Naive thymus-derived CD4-positive, alpha-beta T cell (primary cell): ENCODE measurements at regions of chr22 and their contacts with region 1.

Region 1: GRCh38 chr22:26398741-26399153 is 30.3 kb upstream of the ASPHD2 start:
- DNase-seq: peak; percentile 11 to 61 (median 42)
- ATAC-seq: peak; percentile 83
- H3K4me3 ChIP-seq: no peak overlapping the region
- H3K4me3 Mint-ChIP-seq: no peak overlapping the region
- H3K27ac ChIP-seq: no peak overlapping the region
- H3K27ac Mint-ChIP-seq: no peak overlapping the region
- H3K4me1 ChIP-seq: no peaks in the 10 kb centered on the region
- H3K4me1 Mint-ChIP-seq: peaks cover 0 to 4% (median 0%) of the 10 kb centered on the region in 7 donors
- H3K27me3 ChIP-seq: no peaks in the 10 kb centered on the region
- H3K27me3 Mint-ChIP-seq: peaks cover 2 to 13% (median 4%) of the 10 kb centered on the region in 5 donors

Region 2: GRCh38 chr22:26245001-26245400 is 153.7 kb before region 1 on chr22:
- CTCF ChIA-PET with region 1: no interaction called
- POLR2A ChIA-PET with region 1: no interaction called
- intact Hi-C with region 1: no loop called
- DNase-seq: no peak
- ATAC-seq: no peak
- H3K4me3 ChIP-seq: no peak overlapping the region
- H3K4me3 Mint-ChIP-seq: no peak overlapping the region
- H3K27ac ChIP-seq: no peak overlapping the region
- H3K27ac Mint-ChIP-seq: no peak overlapping the region
- H3K4me1 ChIP-seq: no peaks in the 10 kb centered on the region
- H3K4me1 Mint-ChIP-seq: no peaks in the 10 kb centered on the region
- H3K27me3 ChIP-seq: no peaks in the 10 kb centered on the region
- H3K27me3 Mint-ChIP-seq: peaks cover 0 to 46% (median 24%) of the 10 kb centered on the region in 5 donors

Region 3: DNA sequence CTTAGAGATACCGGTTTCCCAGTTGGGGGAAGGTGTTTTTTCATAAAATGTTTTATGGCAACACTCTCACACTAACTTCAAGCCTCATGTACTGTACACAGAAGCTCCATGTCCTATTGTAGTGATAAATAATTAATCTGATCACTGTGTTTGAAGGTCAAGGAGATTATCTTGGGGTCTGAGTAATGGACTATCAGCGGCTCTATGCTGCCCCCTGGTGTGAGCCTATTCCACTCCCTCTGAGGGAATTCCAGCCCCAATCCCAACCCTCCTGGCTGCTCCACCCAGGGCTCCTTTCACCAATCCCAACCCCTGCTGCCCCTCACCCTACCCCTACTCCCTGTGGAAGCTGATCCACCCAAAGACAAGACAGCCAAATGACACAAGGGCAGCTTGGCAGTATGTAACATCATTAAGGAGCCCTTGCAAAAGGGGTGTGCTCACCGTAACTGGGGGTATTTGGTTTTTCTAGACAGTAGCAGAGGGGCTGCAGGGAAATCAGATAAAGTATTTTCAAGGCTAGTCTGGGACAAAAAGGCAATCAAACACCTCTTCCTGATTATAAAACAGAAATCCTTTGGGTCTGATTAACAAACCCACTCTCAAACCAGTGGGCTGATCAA is 62.6 kb after region 1 on chr22:
- CTCF ChIA-PET with region 1: interaction called, 50 read pairs
- POLR2A ChIA-PET with region 1: no interaction called
- intact Hi-C with region 1: loop called in 1 of 2 experiments (anchors 1 kb)
- DNase-seq: peak in 4 of 9 donors; percentile 15 to 45 (median 30)
- ATAC-seq: peak; percentile 66
- H3K4me3 ChIP-seq: no peak overlapping the region
- H3K4me3 Mint-ChIP-seq: no peak overlapping the region
- H3K27ac ChIP-seq: no peak overlapping the region
- H3K27ac Mint-ChIP-seq: peak overlapping the region in 2 of 9 donors; percentile 42 to 56
- H3K4me1 ChIP-seq: no peaks in the 10 kb centered on the region
- H3K4me1 Mint-ChIP-seq: peaks cover 0 to 6% (median 4%) of the 10 kb centered on the region in 7 donors
- H3K27me3 ChIP-seq: no peaks in the 10 kb centered on the region
- H3K27me3 Mint-ChIP-seq: no peaks in the 10 kb centered on the region

Region 4: DNA sequence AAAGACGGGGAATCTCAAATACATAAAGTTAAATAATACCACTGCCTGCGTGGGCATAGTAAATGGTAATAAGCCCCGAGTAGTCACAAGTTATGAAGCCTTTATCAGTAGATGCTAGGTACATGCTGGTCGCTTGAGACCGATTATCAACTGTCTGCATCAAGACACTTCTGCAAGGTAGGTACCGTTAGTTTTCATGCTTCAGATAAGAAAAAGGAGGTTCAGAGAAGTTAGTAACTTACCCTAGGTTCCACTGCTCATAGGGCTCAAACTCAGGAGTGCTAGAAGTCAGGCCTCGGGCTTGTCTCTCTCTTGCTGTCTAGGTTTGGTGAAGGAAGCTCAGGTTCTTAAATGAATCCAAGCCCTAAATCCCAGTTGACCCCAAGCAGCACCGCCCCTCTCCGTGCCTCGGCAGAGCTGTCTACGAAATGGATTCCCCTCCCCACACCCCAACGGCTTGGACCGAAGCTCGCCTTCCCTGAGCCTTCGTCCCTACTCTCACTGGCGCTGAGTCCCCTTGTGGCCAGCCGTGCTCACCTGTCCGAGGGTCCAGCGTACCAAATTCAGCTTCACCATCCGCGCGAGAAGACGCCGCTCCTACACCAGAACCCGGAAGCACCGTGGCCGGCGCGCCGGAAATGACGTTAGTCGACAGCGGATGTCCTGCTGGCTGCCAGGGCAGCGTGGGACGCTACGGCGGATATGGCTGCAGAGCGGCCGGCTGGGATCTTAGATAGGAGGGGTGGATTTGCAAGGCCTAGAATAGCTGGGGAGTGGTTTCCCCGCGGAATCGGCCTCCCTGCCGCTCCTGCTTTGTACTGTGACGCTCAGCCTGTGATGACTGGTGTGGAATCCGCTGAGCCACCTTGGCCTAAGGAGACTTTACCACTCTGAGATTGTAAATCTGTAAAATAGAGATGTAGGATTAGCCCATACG is 113.4 kb after region 1 on chr22 and contains the start of gene TFIP11:
- CTCF ChIA-PET with region 1: no interaction called
- POLR2A ChIA-PET with region 1: interaction called, 3 read pairs
- intact Hi-C with region 1: loop called in 1 of 2 experiments (anchors 1 kb)
- DNase-seq: peak; percentile 80 to 93 (median 84)
- ATAC-seq: peak; percentile 97
- H3K4me3 ChIP-seq: peak within 1 kb of the TSS; percentile 89
- H3K4me3 Mint-ChIP-seq: peak within 1 kb of the TSS; percentile 96 to 100 (median 99)
- H3K27ac ChIP-seq: peak within 1 kb of the TSS; percentile 96
- H3K27ac Mint-ChIP-seq: peak within 1 kb of the TSS; percentile 96 to 100 (median 99)
- H3K4me1 ChIP-seq: peaks cover 9 to 23% of the 10 kb centered on the region in 2 donors
- H3K4me1 Mint-ChIP-seq: peaks cover 29 to 52% (median 50%) of the 10 kb centered on the region in 7 donors
- H3K27me3 ChIP-seq: no peaks in the 10 kb centered on the region
- H3K27me3 Mint-ChIP-seq: no peaks in the 10 kb centered on the region
- total RNA-seq, gene TFIP11: 63.6 to 107 (median 72.9) TPM

Region 5: GRCh38 chr22:26665813-26666231 is 267.1 kb after region 1 on chr22:
- CTCF ChIA-PET with region 1: no interaction called
- POLR2A ChIA-PET with region 1: no interaction called
- intact Hi-C with region 1: loop called in 1 of 2 experiments (anchors 1 kb)
- DNase-seq: no peak
- ATAC-seq: no peak
- H3K4me3 ChIP-seq: no peak overlapping the region
- H3K4me3 Mint-ChIP-seq: peak overlapping the region in 1 of 10 donors; percentile 83
- H3K27ac ChIP-seq: no peak overlapping the region
- H3K27ac Mint-ChIP-seq: peak overlapping the region in 6 of 9 donors; percentile 21 to 92 (median 74)
- H3K4me1 ChIP-seq: peaks cover 22 to 34% of the 10 kb centered on the region in 2 donors
- H3K4me1 Mint-ChIP-seq: peaks cover 17 to 73% (median 30%) of the 10 kb centered on the region in 7 donors
- H3K27me3 ChIP-seq: no peaks in the 10 kb centered on the region
- H3K27me3 Mint-ChIP-seq: no peaks in the 10 kb centered on the region